T-cell (primary cell): ENCODE measurements at regions of chr12 and their contacts with region 1.

Region 1: DNA sequence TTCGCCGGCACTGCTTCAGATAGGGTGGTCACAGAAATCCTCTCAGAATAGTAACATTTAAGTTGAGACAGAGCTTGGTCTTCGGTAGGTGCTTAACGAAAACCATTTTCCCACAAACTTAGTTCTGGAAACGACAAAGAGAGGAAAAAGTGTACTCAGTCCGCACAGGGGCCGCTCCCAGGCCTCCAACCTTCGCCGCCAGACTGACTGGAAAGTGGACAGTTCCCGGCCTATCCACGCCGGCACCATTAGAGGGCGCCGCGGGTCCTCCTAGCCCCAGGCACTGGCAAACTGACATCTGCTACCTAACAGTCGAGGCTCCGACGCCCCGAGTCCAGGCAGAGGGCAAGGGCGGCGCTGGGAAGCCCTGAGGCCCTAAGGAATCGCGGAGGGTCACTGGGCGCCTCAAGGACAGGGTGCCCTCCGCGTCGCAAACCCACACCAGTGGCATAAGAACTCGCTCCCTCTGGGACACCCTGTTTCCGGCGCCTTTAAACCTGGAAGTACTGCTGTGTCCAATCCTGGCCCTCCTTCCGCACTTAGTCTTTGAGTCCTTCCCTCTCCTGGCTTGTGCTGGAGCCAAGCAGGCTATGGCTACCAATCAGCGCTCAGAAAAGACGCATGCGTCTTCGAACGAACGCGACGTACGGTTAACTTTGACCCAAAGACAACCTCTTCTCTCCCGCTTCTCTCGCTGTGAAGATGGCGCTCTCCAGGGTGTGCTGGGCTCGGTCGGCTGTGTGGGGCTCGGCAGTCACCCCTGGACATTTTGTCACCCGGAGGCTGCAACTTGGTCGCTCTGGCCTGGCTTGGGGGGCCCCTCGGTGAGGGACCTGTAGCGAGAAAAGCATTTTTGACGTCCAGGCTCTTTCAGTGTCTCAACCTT is at the start of gene LETMD1:
- DNase-seq: peak; percentile 82 to 97 (median 90)
- ATAC-seq: peak; percentile 96 to 97 (median 97)
- H3K4me3 ChIP-seq: peak within 1 kb of the TSS; percentile 67 to 84
- H3K4me3 Mint-ChIP-seq: peak within 1 kb of the TSS; percentile 93 to 99 (median 96)
- H3K27ac ChIP-seq: peak within 1 kb of the TSS; percentile 93
- H3K27ac Mint-ChIP-seq: peak within 1 kb of the TSS; percentile 94 to 97
- H3K4me1 ChIP-seq: peaks cover 12 to 22% of the 10 kb centered on the region in 2 experiments
- H3K4me1 Mint-ChIP-seq: peaks cover 35 to 39% (median 39%) of the 10 kb centered on the region in 3 donors
- H3K27me3 ChIP-seq: no peaks in the 10 kb centered on the region
- H3K27me3 Mint-ChIP-seq: no peaks in the 10 kb centered on the region
- total RNA-seq, gene LETMD1: 70.9 to 87.5 (median 71.9) TPM

Region 2: DNA sequence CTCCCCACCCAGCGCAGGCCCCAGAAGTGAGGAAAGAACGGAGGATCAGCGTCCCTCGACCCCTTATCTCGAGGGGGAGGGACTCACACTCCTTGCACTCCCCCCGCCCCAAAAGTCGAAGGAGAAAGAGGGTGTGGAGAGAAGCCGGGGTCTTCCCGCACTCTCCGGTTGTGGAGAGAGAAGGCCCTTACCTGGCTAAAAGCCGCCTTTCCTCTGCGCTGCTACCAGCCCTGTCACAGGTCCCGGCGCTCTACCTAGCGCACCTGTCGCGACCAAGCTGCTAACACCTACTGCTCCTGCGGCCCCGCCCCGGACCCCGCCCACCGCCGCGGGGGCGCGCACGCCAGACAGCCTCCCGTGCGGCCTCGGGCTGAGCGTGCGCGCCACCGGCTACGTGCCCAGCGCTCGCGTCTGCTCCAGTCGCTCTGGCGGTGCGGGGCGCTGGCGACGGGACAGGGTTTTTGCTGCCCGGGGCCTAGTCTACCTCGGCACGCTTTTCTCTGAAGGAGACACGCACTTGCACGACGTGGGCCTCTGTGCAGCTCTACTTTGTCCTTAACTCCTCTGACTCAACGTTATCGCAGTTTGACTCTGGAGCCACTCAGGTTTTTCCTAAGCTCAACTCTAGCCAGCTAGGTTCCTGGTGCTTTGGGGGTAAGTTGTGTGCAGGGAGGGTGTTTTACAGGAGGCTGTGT is 764.5 kb before region 1 on chr12 and contains the start of gene LIMA1:
- CTCF ChIA-PET with region 1: no interaction called
- POLR2A ChIA-PET with region 1: no interaction called
- DNase-seq: peak; percentile 85 to 97 (median 92)
- ATAC-seq: peak; percentile 97 to 99 (median 97)
- H3K4me3 ChIP-seq: peak within 1 kb of the TSS; percentile 65 to 72
- H3K4me3 Mint-ChIP-seq: peak within 1 kb of the TSS; percentile 91 to 95 (median 93)
- H3K27ac ChIP-seq: peak within 1 kb of the TSS; percentile 48
- H3K27ac Mint-ChIP-seq: peak within 1 kb of the TSS; percentile 86 to 93
- H3K4me1 ChIP-seq: peaks cover 0 to 20% of the 10 kb centered on the region in 2 experiments
- H3K4me1 Mint-ChIP-seq: peaks cover 15 to 28% (median 25%) of the 10 kb centered on the region in 3 donors
- H3K27me3 ChIP-seq: no peaks in the 10 kb centered on the region
- H3K27me3 Mint-ChIP-seq: no peaks in the 10 kb centered on the region
- total RNA-seq, gene LIMA1: 8.6 to 14.9 (median 11.1) TPM

Region 3: GRCh38 chr12:50776749-50777728 is 270.9 kb before region 1 on chr12:
- CTCF ChIA-PET with region 1: no interaction called
- POLR2A ChIA-PET with region 1: no interaction called
- DNase-seq: no peak
- ATAC-seq: no peak
- H3K4me3 ChIP-seq: no peak overlapping the region
- H3K4me3 Mint-ChIP-seq: no peak overlapping the region
- H3K27ac ChIP-seq: no peak overlapping the region
- H3K27ac Mint-ChIP-seq: no peak overlapping the region
- H3K4me1 ChIP-seq: peaks cover 0 to 7% of the 10 kb centered on the region in 2 experiments
- H3K4me1 Mint-ChIP-seq: peaks cover 33 to 42% (median 37%) of the 10 kb centered on the region in 3 donors
- H3K27me3 ChIP-seq: no peaks in the 10 kb centered on the region
- H3K27me3 Mint-ChIP-seq: no peaks in the 10 kb centered on the region

Region 4: GRCh38 chr12:51000245-51000644 is 47.7 kb before region 1 on chr12:
- CTCF ChIA-PET with region 1: interaction called in 1 of 2 experiments, 11 read pairs
- POLR2A ChIA-PET with region 1: interaction called in 1 of 2 experiments, 3 read pairs
- DNase-seq: no peak
- ATAC-seq: no peak
- H3K4me3 ChIP-seq: no peak overlapping the region
- H3K4me3 Mint-ChIP-seq: no peak overlapping the region
- H3K27ac ChIP-seq: no peak overlapping the region
- H3K27ac Mint-ChIP-seq: no peak overlapping the region
- H3K4me1 ChIP-seq: no peaks in the 10 kb centered on the region
- H3K4me1 Mint-ChIP-seq: no peaks in the 10 kb centered on the region
- H3K27me3 ChIP-seq: no peaks in the 10 kb centered on the region
- H3K27me3 Mint-ChIP-seq: no peaks in the 10 kb centered on the region

Region 5: DNA sequence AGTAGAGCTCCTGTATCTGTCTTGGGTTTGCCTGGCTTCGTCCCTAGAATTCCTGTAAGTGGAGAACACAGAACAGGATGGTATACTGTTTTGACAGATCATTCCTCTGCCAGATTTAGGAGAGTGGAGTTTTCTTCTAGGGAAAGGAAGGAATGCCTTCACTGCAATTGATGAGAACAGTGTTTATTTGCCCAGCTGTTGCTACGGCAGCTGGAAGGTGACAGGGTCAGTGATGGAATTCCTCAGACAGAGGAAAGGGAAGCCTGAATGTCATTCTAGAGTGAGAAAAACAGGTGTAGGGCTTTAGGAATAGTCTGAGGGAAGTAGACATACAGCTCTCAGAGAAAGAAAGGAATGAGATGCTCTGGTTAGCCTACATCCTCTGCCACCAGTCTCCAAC is 23.8 kb after region 1 on chr12:
- CTCF ChIA-PET with region 1: interaction called in 1 of 2 experiments, 5 read pairs
- POLR2A ChIA-PET with region 1: interaction called in 1 of 2 experiments, 10 read pairs
- DNase-seq: no peak
- ATAC-seq: no peak
- H3K4me3 ChIP-seq: no peak overlapping the region
- H3K4me3 Mint-ChIP-seq: no peak overlapping the region
- H3K27ac ChIP-seq: no peak overlapping the region
- H3K27ac Mint-ChIP-seq: no peak overlapping the region
- H3K4me1 ChIP-seq: peaks cover 0 to 3% of the 10 kb centered on the region in 2 experiments
- H3K4me1 Mint-ChIP-seq: peaks cover 12% of the 10 kb centered on the region in 3 donors
- H3K27me3 ChIP-seq: no peaks in the 10 kb centered on the region
- H3K27me3 Mint-ChIP-seq: no peaks in the 10 kb centered on the region